ENCODE measurements at regions of chr9 and their contacts with region 1.

Region 1: GRCh38 chr9:132901856-132902831 is 23.4 kb downstream of the SPACA9 start:
- DNase-seq: peak; percentile 61 to 81 (median 73)
- H3K4me3 ChIP-seq: no peak overlapping the region
- H3K4me3 Mint-ChIP-seq: no peak overlapping the region
- H3K27ac ChIP-seq: no peak overlapping the region
- H3K27ac Mint-ChIP-seq: peak overlapping the region; percentile 34 to 88 (median 76)
- H3K4me1 ChIP-seq: peaks cover 4% of the 10 kb centered on the region
- H3K4me1 Mint-ChIP-seq: peaks cover 8 to 19% (median 11%) of the 10 kb centered on the region in 3 donors
- H3K27me3 ChIP-seq: no peaks in the 10 kb centered on the region
- H3K27me3 Mint-ChIP-seq: no peaks in the 10 kb centered on the region

Region 2: GRCh38 chr9:132919614-132920268 is 17.6 kb after region 1 on chr9:
- CTCF ChIA-PET with region 1: interaction called, 16 read pairs
- POLR2A ChIA-PET with region 1: no interaction called
- DNase-seq: no peak
- H3K4me3 ChIP-seq: no peak overlapping the region
- H3K4me3 Mint-ChIP-seq: no peak overlapping the region
- H3K27ac ChIP-seq: no peak overlapping the region
- H3K27ac Mint-ChIP-seq: no peak overlapping the region
- H3K4me1 ChIP-seq: no peaks in the 10 kb centered on the region
- H3K4me1 Mint-ChIP-seq: no peaks in the 10 kb centered on the region
- H3K27me3 ChIP-seq: no peaks in the 10 kb centered on the region
- H3K27me3 Mint-ChIP-seq: no peaks in the 10 kb centered on the region

Region 3: DNA sequence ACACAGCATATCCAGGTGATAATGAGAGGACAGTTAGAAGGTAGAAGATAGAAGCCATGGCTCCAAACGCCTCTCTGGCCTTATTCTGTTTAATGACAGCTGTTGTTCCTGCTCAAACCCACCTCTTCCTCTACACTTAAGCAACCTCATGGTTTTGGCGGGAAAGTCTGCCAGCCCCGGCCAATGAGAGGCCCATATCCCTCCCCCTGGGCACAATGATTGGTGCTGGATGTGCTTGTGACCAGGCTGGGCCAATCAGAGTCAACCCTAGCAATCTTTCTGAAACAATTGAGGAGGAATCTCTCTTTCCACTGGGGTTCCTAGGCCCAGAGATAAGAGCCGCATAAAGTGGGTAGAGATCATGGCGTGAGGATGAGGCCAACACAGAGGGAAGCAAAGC is 71.6 kb after region 1 on chr9:
- CTCF ChIA-PET with region 1: interaction called, 10 read pairs
- POLR2A ChIA-PET with region 1: no interaction called
- DNase-seq: no peak
- H3K4me3 ChIP-seq: no peak overlapping the region
- H3K4me3 Mint-ChIP-seq: no peak overlapping the region
- H3K27ac ChIP-seq: no peak overlapping the region
- H3K27ac Mint-ChIP-seq: no peak overlapping the region
- H3K4me1 ChIP-seq: peaks cover 5% of the 10 kb centered on the region
- H3K4me1 Mint-ChIP-seq: peaks cover 2 to 5% (median 3%) of the 10 kb centered on the region in 3 donors
- H3K27me3 ChIP-seq: peaks cover 4% of the 10 kb centered on the region
- H3K27me3 Mint-ChIP-seq: peaks cover 17 to 57% of the 10 kb centered on the region in 2 donors

Measured in CD8-positive, alpha-beta memory T cell (primary cell).